Activated T-helper 1 cell treated with anti-CD3 and anti-CD28 coated beads, Interleukin-12 subunit alpha, Interleukin-12 subunit beta, Interleukin-2, Interleukin-4 antibody, amounts not matched to agents 30 ng/mL and 10 ng/mL and 1 ng/mL, durations not matched to agents 14 hours and 24 hours and 36 hours (primary cell): ENCODE measurements at regions of chr1 and their contacts with region 1.

Region 1: DNA sequence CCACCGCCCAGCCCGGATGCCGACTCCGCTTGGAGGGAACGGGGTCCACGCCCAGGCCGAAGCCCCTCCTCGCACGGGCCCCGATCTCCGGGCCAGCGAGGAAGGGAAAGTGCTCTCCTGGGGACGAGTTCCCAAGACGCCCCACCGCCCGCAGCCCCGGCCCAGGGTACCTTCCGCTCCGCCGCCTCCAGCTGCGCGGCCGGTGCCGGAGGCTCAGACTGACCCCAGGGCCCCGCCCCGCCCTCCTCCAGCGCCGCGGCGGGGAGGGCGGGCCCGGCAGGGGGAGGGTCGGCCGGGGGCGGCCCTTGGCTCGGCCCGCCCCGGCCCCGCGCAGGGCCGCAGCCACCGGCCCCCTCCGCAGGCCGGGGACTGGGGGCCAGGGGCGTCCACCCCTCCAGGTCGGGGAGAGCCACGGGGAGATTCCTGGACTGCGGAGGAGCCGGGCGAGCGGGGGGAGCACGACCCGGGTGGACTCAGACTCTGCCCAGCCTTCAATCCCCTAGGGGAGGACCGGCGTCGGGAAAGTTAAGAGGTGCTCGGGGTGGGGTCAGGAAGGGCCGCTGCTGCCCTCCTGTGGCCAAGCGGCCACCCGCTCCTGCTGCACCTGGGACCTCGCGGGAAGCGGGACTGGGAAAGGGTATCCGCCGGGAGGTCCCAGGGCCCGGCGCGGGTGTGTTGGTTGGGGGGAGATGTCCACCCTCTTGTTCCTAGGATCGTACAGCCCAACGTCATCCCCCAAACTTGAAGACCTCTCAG is at the start of gene RHOC:
- DNase-seq: peak; percentile 60
- H3K4me3 Mint-ChIP-seq: peak within 1 kb of the TSS; percentile 84
- H3K27ac Mint-ChIP-seq: peak within 1 kb of the TSS; percentile 91
- H3K4me1 Mint-ChIP-seq: peaks cover 55% of the 10 kb centered on the region
- H3K27me3 Mint-ChIP-seq: peaks cover 13% of the 10 kb centered on the region
- total RNA-seq, gene RHOC: 50.4 and 63.4 TPM in 2 replicates

Region 2: GRCh38 chr1:112390775-112391602 is 316.1 kb before region 1 on chr1:
- intact Hi-C with region 1: loop called (anchors 1 kb)
- DNase-seq: peak; percentile 75
- H3K4me3 Mint-ChIP-seq: peak overlapping the region; percentile 70
- H3K27ac Mint-ChIP-seq: peak overlapping the region; percentile 15
- H3K4me1 Mint-ChIP-seq: peaks cover 37% of the 10 kb centered on the region
- H3K27me3 Mint-ChIP-seq: peaks cover 1% of the 10 kb centered on the region

Region 3: GRCh38 chr1:112466078-112466660 is 240.9 kb before region 1 on chr1:
- intact Hi-C with region 1: loop called (anchors 1 kb)
- DNase-seq: peak; percentile 81
- H3K4me3 Mint-ChIP-seq: peak overlapping the region; percentile 81
- H3K27ac Mint-ChIP-seq: no peak overlapping the region
- H3K4me1 Mint-ChIP-seq: peaks cover 18% of the 10 kb centered on the region
- H3K27me3 Mint-ChIP-seq: peaks cover 30% of the 10 kb centered on the region

Region 4: GRCh38 chr1:112619520-112620376 is 87.3 kb before region 1 on chr1 and contains the start of gene CAPZA1:
- intact Hi-C with region 1: loop called (anchors 1 kb)
- DNase-seq: peak; percentile 90
- H3K4me3 Mint-ChIP-seq: peak within 1 kb of the TSS; percentile 98
- H3K27ac Mint-ChIP-seq: peak within 1 kb of the TSS; percentile 98
- H3K4me1 Mint-ChIP-seq: peaks cover 48% of the 10 kb centered on the region
- H3K27me3 Mint-ChIP-seq: no peaks in the 10 kb centered on the region
- total RNA-seq, gene CAPZA1: 239 and 242 TPM in 2 replicates

Region 5: GRCh38 chr1:112674439-112674985 is 32.6 kb before region 1 on chr1 and contains the start of gene MOV10:
- intact Hi-C with region 1: loop called (anchors 1 kb)
- DNase-seq: peak; percentile 59
- H3K4me3 Mint-ChIP-seq: peak within 1 kb of the TSS; percentile 97
- H3K27ac Mint-ChIP-seq: peak within 1 kb of the TSS; percentile 98
- H3K4me1 Mint-ChIP-seq: peaks cover 61% of the 10 kb centered on the region
- H3K27me3 Mint-ChIP-seq: no peaks in the 10 kb centered on the region
- total RNA-seq, gene MOV10: 64.6 and 66.2 TPM in 2 replicates